ENCODE measurements at regions of chr7 and their contacts with region 1.

Region 1: DNA sequence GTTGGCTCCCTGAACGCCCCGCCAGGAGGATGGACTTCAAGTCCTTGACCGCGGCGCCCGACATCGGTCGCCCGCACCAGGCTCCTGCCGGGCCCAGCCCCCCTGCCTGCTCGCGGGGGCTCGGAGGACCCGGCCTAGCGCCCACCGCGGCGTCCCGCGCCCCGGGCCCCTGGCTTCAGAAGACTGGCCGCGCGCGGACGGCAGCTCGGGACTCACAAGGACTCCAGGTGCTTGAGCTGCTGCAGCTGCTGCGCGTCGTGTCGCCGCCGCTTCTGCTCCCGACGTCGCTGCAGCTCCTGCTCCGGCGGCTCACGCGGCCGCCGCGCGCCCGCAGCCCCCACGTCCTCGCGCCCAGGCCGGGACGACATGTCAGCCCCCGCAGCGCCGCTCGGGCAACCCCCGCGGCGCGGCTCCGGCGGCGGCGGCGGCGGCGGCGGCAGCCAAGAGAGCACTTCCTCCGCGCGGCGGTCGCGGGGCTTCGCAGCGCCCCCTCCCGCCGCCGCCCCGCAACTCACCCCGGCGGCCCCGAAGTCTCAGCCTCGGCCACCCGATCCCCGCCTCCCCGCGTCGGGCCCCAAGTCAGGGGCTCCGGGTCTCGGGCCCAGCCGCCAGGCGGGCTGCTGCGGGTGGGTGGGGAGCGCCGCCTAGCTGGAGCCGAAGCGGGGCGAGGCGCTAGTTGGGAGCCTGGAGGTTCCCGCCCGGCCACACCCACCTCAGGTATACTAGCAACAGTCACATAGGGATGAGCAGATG is at the start of gene RP9:
- H3K4me3 Mint-ChIP-seq: peak within 1 kb of the TSS; percentile 86
- H3K27ac Mint-ChIP-seq: peak within 1 kb of the TSS; percentile 78
- H3K4me1 Mint-ChIP-seq: peaks cover 28% of the 10 kb centered on the region
- H3K27me3 Mint-ChIP-seq: peaks cover 17% of the 10 kb centered on the region

Region 2: GRCh38 chr7:32495298-32496176 is 613.6 kb before region 1 on chr7 and contains the start of gene AVL9:
- intact Hi-C with region 1: loop called (anchors 10 kb)
- H3K4me3 Mint-ChIP-seq: peak within 1 kb of the TSS; percentile 95
- H3K27ac Mint-ChIP-seq: peak within 1 kb of the TSS; percentile 99
- H3K4me1 Mint-ChIP-seq: peaks cover 23% of the 10 kb centered on the region
- H3K27me3 Mint-ChIP-seq: no peaks in the 10 kb centered on the region

Region 3: DNA sequence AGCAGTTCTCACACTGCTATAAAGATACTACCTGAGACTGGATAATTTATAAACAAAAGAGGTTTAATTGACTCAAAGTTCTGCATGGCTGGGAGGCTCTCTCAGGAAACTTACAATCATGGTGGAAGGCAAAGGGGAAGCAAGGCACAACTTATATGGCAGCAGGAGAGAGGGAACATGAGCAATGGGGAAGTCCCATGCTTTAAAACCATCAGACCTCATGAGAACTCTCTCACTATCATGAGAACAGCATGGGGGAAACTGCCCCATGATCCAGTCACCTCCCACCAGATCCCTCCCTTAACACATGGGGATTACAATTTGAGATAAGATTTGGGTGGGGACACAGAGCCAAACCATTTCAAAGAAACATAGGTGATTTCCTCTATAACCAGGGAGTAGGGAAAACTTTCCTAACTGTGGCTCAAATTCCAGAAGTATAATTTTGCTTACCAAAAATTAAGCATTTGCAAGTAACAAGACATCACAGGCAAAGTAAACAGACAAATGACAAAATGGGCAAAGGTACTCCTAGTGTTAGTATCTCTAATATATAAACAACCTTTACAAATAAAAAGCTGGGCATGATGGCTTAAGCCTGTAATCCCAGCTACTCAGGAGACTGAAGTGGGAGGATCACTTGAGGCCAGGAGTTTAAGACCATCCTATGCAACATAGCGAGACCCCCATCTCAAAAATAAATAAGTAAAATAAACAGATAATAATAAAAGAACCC is 305.6 kb before region 1 on chr7:
- intact Hi-C with region 1: loop called (anchors 10 kb)
- H3K4me3 Mint-ChIP-seq: no peak overlapping the region
- H3K27ac Mint-ChIP-seq: no peak overlapping the region
- H3K4me1 Mint-ChIP-seq: no peaks in the 10 kb centered on the region
- H3K27me3 Mint-ChIP-seq: no peaks in the 10 kb centered on the region

Region 4: GRCh38 chr7:32942786-32943653 is 166.2 kb before region 1 on chr7:
- intact Hi-C with region 1: loop called (anchors 2 kb)
- H3K4me3 Mint-ChIP-seq: peak overlapping the region; percentile 99
- H3K27ac Mint-ChIP-seq: peak overlapping the region; percentile 93
- H3K4me1 Mint-ChIP-seq: peaks cover 31% of the 10 kb centered on the region
- H3K27me3 Mint-ChIP-seq: no peaks in the 10 kb centered on the region

Region 5: DNA sequence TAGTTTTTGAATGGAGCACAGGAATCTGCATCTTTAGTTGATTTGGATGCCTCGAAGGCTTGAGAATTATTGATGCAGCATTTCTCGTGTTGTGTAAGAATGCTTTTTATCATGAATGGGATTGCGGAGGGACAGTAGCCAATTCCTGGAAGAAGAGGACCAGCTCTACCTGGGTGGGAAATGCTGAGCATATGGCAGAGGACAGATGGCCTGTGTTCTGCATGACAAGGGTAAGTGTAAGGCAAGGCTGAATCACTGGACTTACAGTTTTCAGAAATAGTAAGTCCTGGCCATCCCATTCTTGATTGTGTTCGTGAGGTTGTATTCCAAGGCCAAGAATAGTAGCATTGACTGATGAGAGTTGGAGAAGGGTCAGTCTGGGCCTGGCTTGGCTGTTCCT is 15.9 kb before region 1 on chr7:
- intact Hi-C with region 1: no loop called
- H3K4me3 Mint-ChIP-seq: no peak overlapping the region
- H3K27ac Mint-ChIP-seq: no peak overlapping the region
- H3K4me1 Mint-ChIP-seq: peaks cover 5% of the 10 kb centered on the region
- H3K27me3 Mint-ChIP-seq: no peaks in the 10 kb centered on the region

Region 6: DNA sequence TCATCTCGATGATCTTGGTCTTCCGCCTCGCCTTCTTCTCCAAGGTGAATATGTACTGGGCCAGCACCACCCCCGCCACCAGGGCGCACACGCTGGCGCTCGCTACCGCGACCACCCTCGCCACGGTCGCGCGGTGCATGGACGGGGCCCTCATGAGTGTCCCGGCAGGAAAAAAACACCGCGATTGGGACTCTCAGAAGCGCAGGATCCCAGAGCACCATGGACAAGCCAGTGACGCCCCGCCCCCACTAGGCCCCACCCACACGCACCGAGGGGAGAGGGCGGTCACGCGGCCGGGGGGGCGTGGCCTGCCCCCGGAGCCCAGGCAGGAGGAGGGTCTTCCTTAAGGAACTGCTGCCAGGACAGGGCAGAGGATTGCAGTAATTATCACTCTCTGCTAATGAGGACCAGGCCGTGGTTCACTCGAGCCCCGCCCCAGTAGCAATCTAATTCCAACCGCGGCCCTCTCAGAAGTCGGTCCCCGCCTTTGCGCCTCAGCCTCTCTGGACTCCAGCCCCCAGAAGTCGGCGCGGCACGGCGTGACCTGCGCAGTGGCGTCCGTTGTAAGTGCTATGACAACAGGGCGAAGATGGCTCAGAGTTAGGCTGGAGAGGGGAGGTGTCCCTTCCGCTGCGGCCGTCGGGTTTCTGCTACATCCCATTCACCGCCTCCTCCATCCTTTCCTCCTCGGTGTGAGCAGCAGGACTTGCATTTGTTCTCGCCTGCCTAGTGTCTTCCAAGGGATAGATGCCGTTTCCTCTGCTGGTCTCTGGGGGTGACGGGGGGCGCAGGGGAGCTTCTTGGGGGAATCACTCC is 20.0 kb after region 1 on chr7 and contains the start of gene BBS9:
- intact Hi-C with region 1: loop called (anchors 2 kb)
- H3K4me3 Mint-ChIP-seq: peak within 1 kb of the TSS; percentile 97
- H3K27ac Mint-ChIP-seq: peak within 1 kb of the TSS; percentile 82
- H3K4me1 Mint-ChIP-seq: no peaks in the 10 kb centered on the region
- H3K27me3 Mint-ChIP-seq: no peaks in the 10 kb centered on the region